ENCODE measurements at regions of chr18 and their contacts with region 1.

Region 1: DNA sequence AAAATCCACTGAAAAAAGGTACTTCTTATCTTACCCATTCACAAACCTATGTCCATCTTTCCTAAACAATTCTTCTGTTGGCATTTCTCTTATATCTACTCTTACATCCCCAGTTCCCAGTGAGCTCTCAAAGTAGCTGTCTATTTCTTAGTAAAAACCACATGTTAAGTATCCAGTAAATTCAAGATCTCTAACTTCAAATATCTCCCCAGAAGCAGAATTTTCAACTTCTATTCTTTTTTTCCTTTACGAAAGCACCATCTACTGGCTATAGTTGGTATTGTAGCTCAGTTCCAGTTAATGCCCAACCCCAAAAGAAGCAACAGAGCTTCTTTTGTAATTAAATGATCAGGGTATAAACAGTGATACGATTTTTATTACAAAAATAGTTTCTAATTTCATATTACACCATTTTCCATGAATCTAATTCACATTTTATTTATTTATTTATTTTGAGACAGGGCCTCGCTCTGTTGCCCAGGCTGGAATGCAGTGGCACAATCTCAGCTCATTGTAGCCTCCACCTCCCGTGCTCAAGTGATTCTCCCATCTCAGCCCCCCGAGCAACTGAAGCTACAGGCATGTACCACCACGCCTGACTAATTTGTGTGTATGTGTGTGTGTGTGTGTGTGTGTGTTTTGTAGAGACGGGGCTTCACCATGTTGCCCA is 28.5 kb downstream of the HRH4 start:
- DNase-seq: peak in 3 of 14 experiments; percentile 45 to 62 (median 49)
- ATAC-seq: no peak
- H3K4me3 ChIP-seq: no peak overlapping the region
- H3K4me3 Mint-ChIP-seq: no peak overlapping the region
- H3K27ac ChIP-seq: no peak overlapping the region
- H3K27ac Mint-ChIP-seq: no peak overlapping the region
- H3K4me1 ChIP-seq: peaks cover 11% of the 10 kb centered on the region
- H3K4me1 Mint-ChIP-seq: peaks cover 4% of the 10 kb centered on the region
- H3K27me3 ChIP-seq: peaks cover 0 to 2% of the 10 kb centered on the region in 2 experiments
- H3K27me3 Mint-ChIP-seq: peaks cover 11% of the 10 kb centered on the region
- CTCF ChIP-seq: peak; percentile 90

Region 2: GRCh38 chr18:24176727-24177416 is 312.1 kb before region 1 on chr18:
- CTCF ChIA-PET with region 1: no interaction called
- POLR2A ChIA-PET with region 1: interaction called, 3 read pairs
- intact Hi-C with region 1: loop called (anchors 2 to 5 kb)
- DNase-seq: peak in 10 of 14 experiments; percentile 3 to 42 (median 19)
- ATAC-seq: no peak
- H3K4me3 ChIP-seq: no peak overlapping the region
- H3K4me3 Mint-ChIP-seq: no peak overlapping the region
- H3K27ac ChIP-seq: no peak overlapping the region
- H3K27ac Mint-ChIP-seq: no peak overlapping the region
- H3K4me1 ChIP-seq: no peaks in the 10 kb centered on the region
- H3K4me1 Mint-ChIP-seq: no peaks in the 10 kb centered on the region
- H3K27me3 ChIP-seq: no peaks in the 10 kb centered on the region
- H3K27me3 Mint-ChIP-seq: no peaks in the 10 kb centered on the region
- CTCF ChIP-seq: peak; percentile 23

Region 3: GRCh38 chr18:24333071-24333470 is 155.9 kb before region 1 on chr18:
- CTCF ChIA-PET with region 1: no interaction called
- POLR2A ChIA-PET with region 1: no interaction called
- intact Hi-C with region 1: no loop called
- DNase-seq: no peak
- ATAC-seq: no peak
- H3K4me3 ChIP-seq: no peak overlapping the region
- H3K4me3 Mint-ChIP-seq: no peak overlapping the region
- H3K27ac ChIP-seq: no peak overlapping the region
- H3K27ac Mint-ChIP-seq: no peak overlapping the region
- H3K4me1 ChIP-seq: no peaks in the 10 kb centered on the region
- H3K4me1 Mint-ChIP-seq: no peaks in the 10 kb centered on the region
- H3K27me3 ChIP-seq: no peaks in the 10 kb centered on the region
- H3K27me3 Mint-ChIP-seq: no peaks in the 10 kb centered on the region
- CTCF ChIP-seq: no peak

Region 4: GRCh38 chr18:24362758-24363157 is 126.2 kb before region 1 on chr18:
- CTCF ChIA-PET with region 1: interaction called, 12 read pairs
- POLR2A ChIA-PET with region 1: interaction called, 3 read pairs
- intact Hi-C with region 1: loop called (anchors 1 kb)
- DNase-seq: no peak
- ATAC-seq: no peak
- H3K4me3 ChIP-seq: no peak overlapping the region
- H3K4me3 Mint-ChIP-seq: no peak overlapping the region
- H3K27ac ChIP-seq: no peak overlapping the region
- H3K27ac Mint-ChIP-seq: no peak overlapping the region
- H3K4me1 ChIP-seq: no peaks in the 10 kb centered on the region
- H3K4me1 Mint-ChIP-seq: no peaks in the 10 kb centered on the region
- H3K27me3 ChIP-seq: no peaks in the 10 kb centered on the region
- H3K27me3 Mint-ChIP-seq: no peaks in the 10 kb centered on the region
- CTCF ChIP-seq: no peak

Region 5: DNA sequence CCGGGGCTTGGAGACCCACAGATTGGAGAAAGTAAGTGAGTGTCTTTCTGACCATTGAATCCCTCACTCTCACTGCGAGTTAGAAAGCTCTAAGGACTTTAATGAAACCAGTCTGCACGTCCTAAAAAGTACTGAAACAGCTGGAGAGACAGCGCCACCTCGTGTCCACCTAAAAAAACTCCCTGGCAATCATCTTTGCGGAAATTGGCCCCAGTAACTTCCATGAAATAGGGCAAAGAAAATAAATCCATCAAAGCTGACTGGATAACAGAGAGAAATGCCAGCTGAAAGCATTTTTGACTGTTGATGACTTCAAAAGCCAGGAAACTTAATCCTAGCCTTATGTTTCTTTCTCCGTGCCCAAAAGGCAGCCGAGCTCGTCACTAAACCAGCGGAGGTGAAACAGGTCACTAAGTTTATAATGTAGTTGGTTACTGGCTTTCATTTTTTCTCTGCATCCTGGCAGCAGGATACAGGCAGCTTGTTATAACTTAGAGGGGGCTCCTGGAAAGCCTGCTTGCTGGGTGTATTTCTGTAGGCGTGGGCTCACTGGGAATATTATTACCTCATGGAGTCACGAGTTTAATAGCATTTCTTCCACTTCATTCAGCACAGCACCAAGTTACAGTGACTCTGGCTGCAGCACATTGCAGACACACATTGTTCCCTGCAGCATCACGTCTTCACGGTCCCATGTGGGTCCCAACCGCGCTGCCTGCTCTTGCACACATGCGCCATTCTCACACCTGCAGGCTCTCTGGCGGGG is 238.0 kb after region 1 on chr18:
- CTCF ChIA-PET with region 1: interaction called, 4 read pairs
- POLR2A ChIA-PET with region 1: no interaction called
- intact Hi-C with region 1: loop called (anchors 1 to 2 kb)
- DNase-seq: peak; percentile 17 to 74 (median 36)
- ATAC-seq: no peak
- H3K4me3 ChIP-seq: no peak overlapping the region
- H3K4me3 Mint-ChIP-seq: no peak overlapping the region
- H3K27ac ChIP-seq: no peak overlapping the region
- H3K27ac Mint-ChIP-seq: no peak overlapping the region
- H3K4me1 ChIP-seq: no peaks in the 10 kb centered on the region
- H3K4me1 Mint-ChIP-seq: no peaks in the 10 kb centered on the region
- H3K27me3 ChIP-seq: peaks cover 4 to 5% of the 10 kb centered on the region in 2 experiments
- H3K27me3 Mint-ChIP-seq: peaks cover 3% of the 10 kb centered on the region
- CTCF ChIP-seq: peak; percentile 71

Measured in CD4-positive, alpha-beta T cell (primary cell).